MCF 10A (cell line): ENCODE measurements at regions of chr4 and their contacts with region 1.

Region 1: DNA sequence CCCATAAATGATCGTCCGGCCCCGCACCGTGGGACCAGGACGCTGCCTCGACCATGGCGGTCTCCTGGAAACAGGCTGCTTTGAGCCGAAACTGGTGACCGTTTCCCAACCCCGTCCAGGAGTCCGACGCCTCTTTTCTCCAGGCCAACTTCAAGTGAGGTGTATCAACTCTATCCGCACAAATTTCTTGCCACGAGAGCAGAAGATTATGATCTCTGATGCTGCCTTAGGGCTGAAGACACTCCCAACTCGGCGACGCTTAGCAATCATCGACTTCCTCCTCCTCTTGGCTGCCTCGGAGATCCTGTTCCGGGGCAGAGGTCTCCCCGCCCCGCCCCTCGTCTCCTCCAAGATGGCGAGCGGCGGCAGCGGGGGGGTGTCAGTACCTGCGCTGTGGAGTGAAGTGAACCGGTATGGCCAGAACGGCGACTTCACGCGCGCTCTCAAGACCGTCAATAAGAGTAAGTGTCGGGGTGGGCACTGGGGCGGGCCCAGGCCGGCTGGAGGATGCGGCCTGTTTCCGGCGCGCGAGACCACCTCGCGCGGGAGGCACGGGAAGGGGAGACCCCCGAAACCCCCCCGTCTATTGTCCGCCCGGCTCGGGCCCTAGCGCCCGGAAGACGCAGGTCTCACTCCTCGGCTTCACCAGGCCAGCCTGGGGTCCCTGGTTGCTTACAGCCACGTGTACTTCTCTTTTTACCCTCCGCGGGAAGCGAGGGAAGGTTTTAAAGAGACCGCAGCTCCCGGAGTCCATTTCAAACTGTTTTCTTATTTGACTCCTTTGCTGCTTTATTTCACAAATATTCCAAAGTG is at the start of gene SRP72:
- DNase-seq: peak; percentile 91
- H3K4me3 Mint-ChIP-seq: peak within 1 kb of the TSS; percentile 100
- H3K27ac Mint-ChIP-seq: peak within 1 kb of the TSS; percentile 99
- H3K4me1 Mint-ChIP-seq: peaks cover 31% of the 10 kb centered on the region
- H3K27me3 Mint-ChIP-seq: no peaks in the 10 kb centered on the region
- CTCF ChIP-seq: no peak
- total RNA-seq, gene SRP72: 348 and 419 TPM in 2 replicates

Region 2: GRCh38 chr4:55948726-55949474 is 518.6 kb before region 1 on chr4 and contains the start of gene CEP135:
- CTCF ChIA-PET with region 1: interaction called, 5 read pairs
- POLR2A ChIA-PET with region 1: interaction called, 10 read pairs
- intact Hi-C with region 1: loop called (anchors 5 kb)
- DNase-seq: peak; percentile 90
- H3K4me3 Mint-ChIP-seq: peak within 1 kb of the TSS; percentile 91
- H3K27ac Mint-ChIP-seq: peak within 1 kb of the TSS; percentile 97
- H3K4me1 Mint-ChIP-seq: peaks cover 23% of the 10 kb centered on the region
- H3K27me3 Mint-ChIP-seq: no peaks in the 10 kb centered on the region
- CTCF ChIP-seq: peak; percentile 91
- total RNA-seq, gene CEP135: 12.4 and 14.0 TPM in 2 replicates

Region 3: DNA sequence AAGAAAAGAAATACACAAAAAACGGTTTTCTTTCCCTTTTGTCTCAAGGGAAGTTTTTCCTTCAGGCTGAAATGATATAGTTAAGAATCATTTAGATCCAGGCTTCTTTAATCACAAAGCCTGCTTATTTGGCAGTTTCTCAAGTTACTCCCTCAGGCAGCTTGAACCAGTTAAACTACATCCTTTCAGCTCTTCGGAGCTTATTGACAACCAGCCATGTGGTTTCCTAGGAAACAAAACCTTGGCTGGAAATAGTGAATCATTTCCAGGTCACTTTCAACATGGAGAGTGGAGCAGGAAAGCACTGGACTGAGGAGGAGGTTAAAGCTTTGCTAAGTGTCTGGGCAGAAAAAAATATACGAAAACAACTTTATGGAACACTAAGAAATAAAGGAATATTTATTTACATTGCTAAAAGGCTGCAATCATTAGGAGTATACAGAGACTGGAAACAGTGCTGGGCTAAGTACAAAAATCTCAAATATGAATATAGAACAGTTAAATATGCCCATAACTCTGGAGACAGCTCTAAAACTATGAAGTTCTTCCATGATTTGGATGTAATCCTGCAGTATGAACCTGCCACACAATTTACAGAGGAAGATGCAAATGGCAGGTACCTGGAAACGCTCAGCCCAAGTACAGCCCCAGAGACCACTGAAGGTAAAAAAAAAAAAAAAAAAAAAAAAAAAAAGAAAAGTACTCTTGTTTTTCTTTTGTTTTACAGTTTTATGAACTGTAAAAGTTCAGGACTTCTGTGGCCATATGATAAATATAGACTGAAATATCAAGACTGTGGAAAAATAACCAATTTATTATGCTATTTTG is 57.0 kb before region 1 on chr4:
- CTCF ChIA-PET with region 1: no interaction called
- POLR2A ChIA-PET with region 1: interaction called, 11 read pairs
- intact Hi-C with region 1: no loop called
- DNase-seq: peak; percentile 96
- H3K4me3 Mint-ChIP-seq: peak overlapping the region; percentile 72
- H3K27ac Mint-ChIP-seq: peak overlapping the region; percentile 98
- H3K4me1 Mint-ChIP-seq: peaks cover 14% of the 10 kb centered on the region
- H3K27me3 Mint-ChIP-seq: no peaks in the 10 kb centered on the region
- CTCF ChIP-seq: no peak

Region 4: DNA sequence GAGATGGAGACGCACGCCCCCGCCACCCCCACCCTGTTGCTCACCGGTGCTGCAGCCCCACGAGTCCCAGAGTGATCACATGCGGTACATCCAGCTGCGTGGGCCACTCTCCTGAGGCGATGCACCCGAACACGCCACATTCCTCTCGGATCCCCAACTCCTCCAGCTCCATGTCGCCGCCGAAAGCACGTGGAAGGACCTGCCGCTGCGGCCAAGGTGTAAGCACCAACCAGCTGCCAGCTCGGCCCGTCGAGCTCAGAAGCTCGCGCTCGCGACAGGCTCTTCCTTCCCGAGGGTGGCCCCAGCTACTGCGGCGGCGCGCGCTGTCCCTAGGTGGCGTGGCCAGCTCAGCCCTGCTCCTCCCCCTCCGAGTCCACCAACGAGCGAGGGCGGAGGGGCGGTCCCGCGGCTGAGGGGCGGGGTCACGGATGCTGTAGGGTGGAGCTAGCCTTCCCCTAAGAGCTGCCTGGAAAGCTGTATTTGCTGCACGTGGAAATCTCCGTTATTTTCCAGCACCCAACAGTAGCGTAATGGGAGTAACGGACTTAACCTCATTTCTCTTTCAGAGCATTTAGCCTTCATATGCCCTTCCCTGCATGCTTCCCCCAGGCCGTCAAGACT is 32.1 kb before region 1 on chr4 and contains the start of gene PPAT:
- CTCF ChIA-PET with region 1: interaction called, 5 read pairs
- POLR2A ChIA-PET with region 1: interaction called, 131 read pairs
- intact Hi-C with region 1: loop called (anchors 2 kb)
- DNase-seq: peak; percentile 98
- H3K4me3 Mint-ChIP-seq: peak within 1 kb of the TSS; percentile 95
- H3K27ac Mint-ChIP-seq: peak within 1 kb of the TSS; percentile 91
- H3K4me1 Mint-ChIP-seq: peaks cover 23% of the 10 kb centered on the region
- H3K27me3 Mint-ChIP-seq: no peaks in the 10 kb centered on the region
- CTCF ChIP-seq: no peak
- total RNA-seq, gene PPAT: 35.0 and 47.0 TPM in 2 replicates

Region 5: GRCh38 chr4:56544573-56545131 is 77.2 kb after region 1 on chr4:
- CTCF ChIA-PET with region 1: interaction called, 9 read pairs
- POLR2A ChIA-PET with region 1: interaction called, 5 read pairs
- intact Hi-C with region 1: loop called (anchors 2 kb)
- DNase-seq: peak; percentile 77
- H3K4me3 Mint-ChIP-seq: peak overlapping the region; percentile 75
- H3K27ac Mint-ChIP-seq: no peak overlapping the region
- H3K4me1 Mint-ChIP-seq: peaks cover 5% of the 10 kb centered on the region
- H3K27me3 Mint-ChIP-seq: no peaks in the 10 kb centered on the region
- CTCF ChIP-seq: peak; percentile 96

Region 6: DNA sequence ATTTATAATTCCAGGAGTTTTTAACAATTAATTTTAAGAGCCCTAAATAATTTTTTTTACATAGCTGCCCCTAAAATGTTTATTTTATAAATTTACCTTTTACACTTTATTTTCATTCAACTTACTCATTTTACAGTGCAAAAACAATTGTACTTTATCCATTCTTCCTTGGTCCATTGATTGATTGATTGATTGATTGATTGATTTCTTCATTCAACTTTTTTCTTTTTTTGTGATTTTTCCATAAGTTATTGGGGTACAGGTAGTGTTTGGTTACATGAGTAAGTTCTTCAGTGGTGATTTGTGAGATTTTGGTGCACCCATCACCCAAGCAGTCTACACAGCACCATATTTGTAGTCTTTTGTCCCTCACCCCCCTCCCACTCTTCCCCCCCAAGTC is 119.6 kb after region 1 on chr4:
- CTCF ChIA-PET with region 1: no interaction called
- POLR2A ChIA-PET with region 1: no interaction called
- intact Hi-C with region 1: no loop called
- DNase-seq: no peak
- H3K4me3 Mint-ChIP-seq: no peak overlapping the region
- H3K27ac Mint-ChIP-seq: no peak overlapping the region
- H3K4me1 Mint-ChIP-seq: no peaks in the 10 kb centered on the region
- H3K27me3 Mint-ChIP-seq: no peaks in the 10 kb centered on the region
- CTCF ChIP-seq: no peak

Region 7: DNA sequence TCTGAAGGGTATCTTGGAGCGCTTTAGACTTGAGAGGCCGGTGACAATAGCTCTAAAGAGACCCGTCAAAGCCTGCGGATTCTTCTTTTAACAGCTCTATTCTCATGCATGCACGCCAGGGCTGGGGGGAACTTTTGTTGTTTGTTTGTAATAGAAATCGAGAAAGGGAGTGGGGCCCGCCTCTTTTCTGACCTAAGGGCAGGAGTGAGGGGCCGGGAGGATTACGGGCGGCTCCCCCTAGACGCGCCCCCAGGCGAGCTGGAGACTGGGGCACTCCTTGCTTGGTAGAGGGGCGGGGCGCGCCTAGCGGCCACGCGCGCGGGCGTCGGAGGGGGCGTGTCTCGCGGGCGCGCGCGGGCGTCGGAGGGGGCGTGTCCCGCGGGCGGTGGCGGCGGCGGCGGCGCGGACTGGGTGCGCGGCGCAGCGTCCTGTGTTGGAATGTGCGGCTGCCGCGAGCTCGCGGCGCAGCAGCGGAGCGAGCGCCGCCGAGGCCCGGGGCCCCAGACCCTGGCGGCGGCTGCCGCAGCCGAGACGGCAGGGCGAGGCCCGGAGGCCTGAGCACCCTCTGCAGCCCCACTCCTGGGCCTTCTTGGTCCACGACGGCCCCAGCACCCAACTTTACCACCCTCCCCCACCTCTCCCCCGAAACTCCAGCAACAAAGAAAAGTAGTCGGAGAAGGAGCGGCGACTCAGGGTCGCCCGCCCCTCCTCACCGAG is 440.2 kb after region 1 on chr4 and contains the start of gene REST:
- CTCF ChIA-PET with region 1: no interaction called
- POLR2A ChIA-PET with region 1: interaction called, 12 read pairs
- intact Hi-C with region 1: no loop called
- DNase-seq: peak; percentile 63
- H3K4me3 Mint-ChIP-seq: peak within 1 kb of the TSS; percentile 97
- H3K27ac Mint-ChIP-seq: peak within 1 kb of the TSS; percentile 85
- H3K4me1 Mint-ChIP-seq: peaks cover 18% of the 10 kb centered on the region
- H3K27me3 Mint-ChIP-seq: no peaks in the 10 kb centered on the region
- CTCF ChIP-seq: no peak
- total RNA-seq, gene REST: 50.5 and 51.6 TPM in 2 replicates